ENCODE measurements at regions of chr9 and their contacts with region 1.

Region 1: GRCh38 chr9:34546834-34547827 is 24.3 kb upstream of the ENHO start:
- DNase-seq: peak; percentile 53
- H3K4me3 ChIP-seq: no peak overlapping the region
- H3K27ac ChIP-seq: no peak overlapping the region
- H3K4me1 ChIP-seq: no peaks in the 10 kb centered on the region
- H3K27me3 ChIP-seq: no peaks in the 10 kb centered on the region
- CTCF ChIP-seq: peak; percentile 56

Region 2: DNA sequence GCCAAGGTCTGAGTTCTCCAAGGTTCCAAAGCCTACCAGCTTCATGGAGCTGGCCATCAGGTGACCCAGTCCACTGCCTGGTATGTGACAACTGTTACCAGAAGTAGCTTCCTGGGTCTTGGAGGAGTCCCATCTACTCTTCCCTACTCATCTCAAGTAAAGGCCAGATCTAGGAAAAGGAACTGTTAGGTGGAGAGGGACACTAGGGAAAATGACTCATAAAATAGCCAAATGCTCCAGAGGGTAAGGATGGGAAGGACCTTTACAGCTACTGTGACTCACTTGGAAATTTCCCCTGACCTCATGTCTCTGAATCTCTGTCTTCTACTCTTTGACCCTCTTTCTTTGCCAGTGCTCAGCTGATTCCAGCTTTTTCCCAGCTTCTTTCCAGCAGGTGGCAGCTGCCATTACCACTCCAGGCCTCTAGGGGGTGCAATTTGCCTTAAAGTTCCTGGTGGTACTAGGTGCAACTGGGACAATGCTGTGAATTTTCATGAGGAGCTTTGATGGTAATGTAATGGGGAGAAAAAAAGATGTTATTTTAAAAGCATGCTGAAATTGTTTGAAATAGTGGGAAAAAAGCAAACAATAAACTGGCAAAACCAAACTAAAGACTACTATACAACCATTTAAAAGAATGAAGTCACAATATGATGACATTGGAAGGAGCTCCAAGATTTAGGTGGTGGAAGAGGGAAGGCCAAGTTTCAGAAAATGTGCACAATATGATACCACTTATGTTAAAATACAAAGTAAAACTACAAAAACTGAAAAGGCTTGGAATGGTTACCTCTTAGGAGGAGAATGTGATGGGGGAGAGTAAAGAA is 143.4 kb before region 1 on chr9:
- intact Hi-C with region 1: loop called (anchors 5 kb)
- DNase-seq: peak; percentile 73
- H3K4me3 ChIP-seq: no peak overlapping the region
- H3K27ac ChIP-seq: no peak overlapping the region
- H3K4me1 ChIP-seq: no peaks in the 10 kb centered on the region
- H3K27me3 ChIP-seq: no peaks in the 10 kb centered on the region
- CTCF ChIP-seq: peak; percentile 98

Region 3: DNA sequence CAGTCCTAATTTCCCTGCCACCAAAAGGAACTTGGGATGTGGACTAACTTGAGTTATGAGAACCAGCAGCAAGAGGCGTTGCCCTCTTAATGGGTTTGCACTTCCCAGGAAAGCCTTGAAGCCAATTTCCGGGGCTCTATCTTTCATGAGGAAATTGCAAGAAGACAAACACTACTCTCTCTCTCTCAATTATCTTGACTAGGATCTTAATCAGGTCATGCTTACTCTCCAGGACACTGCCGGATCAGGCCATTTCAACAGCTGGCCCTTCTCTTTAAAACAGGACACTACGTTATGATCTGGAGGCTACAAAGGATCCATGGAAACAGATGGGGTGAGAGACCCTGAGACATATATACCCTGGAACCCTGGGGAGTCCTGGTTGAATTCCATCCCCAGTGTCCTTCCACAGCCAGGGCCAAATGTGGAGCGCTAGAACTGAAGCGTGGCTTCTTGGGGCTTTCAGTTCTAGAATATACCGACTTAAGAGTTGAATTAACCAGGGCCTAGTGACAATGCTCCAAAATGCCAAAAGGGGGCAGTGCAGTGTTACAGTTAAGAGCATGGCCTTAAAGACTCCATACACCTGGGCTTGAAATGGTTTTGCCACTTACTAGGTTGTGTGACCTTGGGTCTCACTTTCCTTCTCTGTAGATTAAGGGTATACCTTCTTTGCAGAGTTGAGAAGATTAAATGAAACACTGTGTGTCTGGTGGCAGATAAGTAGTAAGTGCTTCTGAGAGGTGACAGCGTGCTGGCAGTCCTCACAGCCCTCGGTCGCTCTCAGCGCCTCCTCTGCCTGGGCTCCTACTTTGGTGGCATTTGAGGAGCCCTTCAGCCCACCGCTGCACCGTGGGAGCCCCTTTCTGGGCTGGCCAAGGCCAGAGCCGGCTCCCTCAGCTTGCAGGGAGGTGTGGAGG is 109.9 kb before region 1 on chr9:
- intact Hi-C with region 1: loop called (anchors 5 kb)
- DNase-seq: peak; percentile 65
- H3K4me3 ChIP-seq: no peak overlapping the region
- H3K27ac ChIP-seq: no peak overlapping the region
- H3K4me1 ChIP-seq: no peaks in the 10 kb centered on the region
- H3K27me3 ChIP-seq: no peaks in the 10 kb centered on the region
- CTCF ChIP-seq: peak; percentile 73

Region 4: DNA sequence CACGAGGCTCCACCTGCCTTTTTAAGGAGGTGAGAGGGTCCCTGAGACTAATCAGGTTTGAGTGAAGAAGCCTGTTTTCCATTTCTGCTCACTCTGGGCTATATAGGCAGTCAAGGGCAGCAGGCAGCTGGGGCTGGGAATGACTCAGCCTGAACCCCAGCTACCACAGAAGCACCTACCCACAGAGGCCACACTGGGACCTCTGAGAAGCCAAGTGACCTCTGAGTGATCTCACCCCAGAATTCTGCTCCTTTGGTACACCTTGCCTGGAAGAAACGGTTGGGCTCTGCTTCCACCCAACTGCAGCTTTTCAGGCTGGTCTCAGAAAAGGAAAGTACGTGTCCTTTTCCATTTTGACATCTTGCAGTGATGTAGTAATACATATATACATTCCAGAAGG is 95.6 kb before region 1 on chr9:
- intact Hi-C with region 1: no loop called
- DNase-seq: no peak
- H3K4me3 ChIP-seq: no peak overlapping the region
- H3K27ac ChIP-seq: no peak overlapping the region
- H3K4me1 ChIP-seq: no peaks in the 10 kb centered on the region
- H3K27me3 ChIP-seq: no peaks in the 10 kb centered on the region
- CTCF ChIP-seq: no peak

Region 5: DNA sequence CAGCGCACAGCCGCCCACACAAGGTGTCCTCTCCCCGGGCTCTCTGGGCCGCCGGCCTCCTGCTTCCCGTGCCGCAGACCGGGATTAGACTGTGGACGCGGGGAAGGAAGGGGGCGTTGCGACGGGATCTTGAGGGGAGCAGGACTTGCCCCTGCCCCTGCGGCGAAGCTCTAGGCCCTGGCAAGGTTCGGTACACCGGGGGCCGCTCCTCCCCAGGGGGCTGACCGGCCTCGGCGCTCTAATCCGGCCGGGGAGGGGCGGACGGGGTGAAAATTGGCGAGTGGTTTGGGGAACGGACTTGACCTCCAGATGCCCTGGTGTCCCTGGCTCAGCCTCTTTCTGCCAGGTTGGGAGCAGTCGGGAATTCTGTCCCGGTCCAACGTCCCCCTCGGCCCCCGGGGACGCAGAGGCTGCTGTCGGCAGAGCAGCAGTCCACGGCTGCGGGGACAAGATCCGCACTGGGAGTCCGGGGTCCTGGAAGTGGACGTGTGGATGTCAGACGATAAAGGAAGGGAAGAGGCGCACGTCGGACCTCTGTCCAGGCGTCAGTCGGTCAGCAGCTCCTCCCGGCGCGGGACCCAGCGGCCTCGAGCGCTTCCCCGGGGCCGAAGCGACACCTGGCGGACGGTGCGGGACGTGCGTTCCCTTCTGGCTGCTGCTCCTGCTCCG is 44.3 kb after region 1 on chr9:
- intact Hi-C with region 1: loop called (anchors 2 kb)
- DNase-seq: peak; percentile 89
- H3K4me3 ChIP-seq: peak overlapping the region; percentile 31
- H3K27ac ChIP-seq: no peak overlapping the region
- H3K4me1 ChIP-seq: peaks cover 18% of the 10 kb centered on the region
- H3K27me3 ChIP-seq: peaks cover 53% of the 10 kb centered on the region
- CTCF ChIP-seq: peak; percentile 89

Region 6: GRCh38 chr9:34628656-34629491 is 81.7 kb after region 1 on chr9 and contains the start of gene ARID3C:
- intact Hi-C with region 1: no loop called
- DNase-seq: no peak
- H3K4me3 ChIP-seq: peak within 1 kb of the TSS; percentile 33
- H3K27ac ChIP-seq: no peak within 1 kb of the TSS
- H3K4me1 ChIP-seq: no peaks in the 10 kb centered on the region
- H3K27me3 ChIP-seq: peaks cover 61% of the 10 kb centered on the region
- CTCF ChIP-seq: no peak
- total RNA-seq, gene ARID3C: not detected

Measured in colonic mucosa (tissue), 4 donors.